Dendritic cell treated with granulocyte-macrophage colony-stimulating factor and Interleukin-4, amounts not matched to agents 40 ng/mL and 50 ng/mL, for 4 days (primary cell): ENCODE measurements at regions of chr19 and their contacts with region 1.

Region 1: GRCh38 chr19:12187625-12188024 is 24.7 kb downstream of the ZNF136 start:
- H3K4me3 Mint-ChIP-seq: no peak overlapping the region
- H3K27ac Mint-ChIP-seq: no peak overlapping the region
- H3K4me1 Mint-ChIP-seq: no peaks in the 10 kb centered on the region
- H3K27me3 Mint-ChIP-seq: no peaks in the 10 kb centered on the region

Region 2: GRCh38 chr19:12126707-12127106 is 60.9 kb before region 1 on chr19:
- intact Hi-C with region 1: no loop called
- H3K4me3 Mint-ChIP-seq: no peak overlapping the region
- H3K27ac Mint-ChIP-seq: no peak overlapping the region
- H3K4me1 Mint-ChIP-seq: no peaks in the 10 kb centered on the region
- H3K27me3 Mint-ChIP-seq: no peaks in the 10 kb centered on the region

Region 3: GRCh38 chr19:12527034-12527836 is 339.6 kb after region 1 on chr19:
- intact Hi-C with region 1: loop called (anchors 10 kb)
- H3K4me3 Mint-ChIP-seq: no peak overlapping the region
- H3K27ac Mint-ChIP-seq: no peak overlapping the region
- H3K4me1 Mint-ChIP-seq: no peaks in the 10 kb centered on the region
- H3K27me3 Mint-ChIP-seq: no peaks in the 10 kb centered on the region